AG04449 (cell line): ENCODE measurements at regions of chr1 and their contacts with region 1.

Region 1: DNA sequence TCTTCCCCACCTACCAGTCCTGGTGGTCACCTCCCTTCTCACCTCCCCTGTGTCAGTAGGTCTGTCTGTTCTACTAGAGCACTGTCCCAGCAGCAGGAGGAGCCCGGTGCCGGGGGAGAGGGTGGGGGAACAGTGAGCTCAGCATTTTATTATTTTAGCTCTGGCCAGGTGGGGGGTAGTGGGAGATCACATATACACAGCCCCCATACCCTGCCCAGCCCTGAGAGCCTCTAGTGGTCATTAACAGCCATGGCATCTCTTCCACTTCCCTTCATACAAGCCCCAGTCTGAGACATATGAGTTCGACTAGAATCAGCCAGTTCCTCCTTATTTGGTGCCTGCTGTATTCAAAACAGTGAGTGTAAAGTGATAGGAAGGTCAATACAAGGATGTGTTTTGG is at the start of gene TMOD4:
- DNase-seq: no peak
- H3K4me3 ChIP-seq: no peak within 1 kb of the TSS
- CTCF ChIP-seq: peak; percentile 38

Region 2: DNA sequence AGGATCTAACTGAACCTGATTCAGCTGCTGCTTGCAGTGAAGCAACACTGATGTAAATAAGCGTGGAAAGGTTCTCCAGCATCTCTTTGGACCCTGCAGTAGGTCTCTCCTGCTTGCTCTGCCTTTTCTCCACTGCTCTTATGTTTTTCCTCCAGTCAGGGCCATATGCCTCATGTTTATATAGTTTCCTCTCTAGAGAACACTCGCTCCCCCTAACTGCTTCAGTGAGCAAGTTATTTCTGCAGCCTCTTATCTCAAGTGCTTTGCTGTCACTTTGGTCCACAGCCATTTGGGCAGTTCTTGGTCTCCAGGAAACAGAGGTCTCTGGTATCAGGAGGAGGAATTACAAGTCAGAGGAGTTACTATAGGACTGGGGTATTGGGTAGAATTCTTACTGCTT is 162.4 kb before region 1 on chr1:
- CTCF ChIA-PET with region 1: no interaction called
- POLR2A ChIA-PET with region 1: no interaction called
- DNase-seq: no peak
- H3K4me3 ChIP-seq: no peak overlapping the region
- CTCF ChIP-seq: no peak

Region 3: GRCh38 chr1:151036363-151036762 is 139.5 kb before region 1 on chr1 and contains the start of gene BNIPL:
- CTCF ChIA-PET with region 1: no interaction called
- POLR2A ChIA-PET with region 1: no interaction called
- DNase-seq: no peak
- H3K4me3 ChIP-seq: no peak within 1 kb of the TSS
- CTCF ChIP-seq: no peak

Region 4: DNA sequence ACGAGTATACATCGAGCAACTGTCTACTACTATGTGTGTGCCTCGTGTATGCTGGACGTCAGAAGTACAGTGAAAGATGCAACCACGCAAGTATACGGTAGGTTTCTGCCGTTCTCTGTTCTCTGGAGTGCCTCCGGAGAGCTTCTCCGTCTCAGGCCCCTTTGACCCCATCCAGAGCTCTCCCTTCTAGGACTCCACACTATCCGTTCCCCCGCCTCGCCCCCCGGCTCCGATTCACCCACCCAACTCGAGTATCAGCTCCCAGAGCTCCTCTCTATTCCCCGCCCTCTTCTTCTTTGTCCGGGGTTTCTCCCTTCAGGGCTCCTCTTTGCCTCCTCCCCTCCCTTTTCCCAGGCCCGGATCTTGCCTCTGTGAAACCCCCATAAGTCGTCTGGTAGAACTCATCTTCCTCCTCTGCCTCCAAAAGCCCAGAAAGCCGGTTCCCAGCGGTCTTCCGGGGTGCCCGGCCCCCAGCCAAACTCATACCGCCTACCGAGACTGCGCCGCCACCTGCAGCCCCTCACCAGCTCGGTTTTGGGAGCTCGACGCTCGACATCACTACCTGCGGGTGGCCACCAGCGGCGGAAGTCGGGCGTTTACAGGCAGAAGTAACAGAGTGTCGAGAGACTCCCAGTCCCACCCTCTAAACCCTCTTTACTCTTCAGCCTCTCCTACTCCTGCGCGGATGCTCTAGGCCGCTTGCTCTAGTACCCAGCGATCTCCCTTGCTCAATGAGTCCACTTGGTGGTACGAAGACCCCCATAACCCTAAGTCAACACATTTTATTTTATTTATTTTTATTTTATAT is 13.9 kb after region 1 on chr1 and contains the start of gene VPS72:
- CTCF ChIA-PET with region 1: interaction called, 24 read pairs
- POLR2A ChIA-PET with region 1: interaction called, 6 read pairs
- DNase-seq: no peak
- H3K4me3 ChIP-seq: peak within 1 kb of the TSS; percentile 67
- CTCF ChIP-seq: no peak